Calu3 (cell line): ENCODE measurements at regions of chr7 and their contacts with region 1.

Region 1: DNA sequence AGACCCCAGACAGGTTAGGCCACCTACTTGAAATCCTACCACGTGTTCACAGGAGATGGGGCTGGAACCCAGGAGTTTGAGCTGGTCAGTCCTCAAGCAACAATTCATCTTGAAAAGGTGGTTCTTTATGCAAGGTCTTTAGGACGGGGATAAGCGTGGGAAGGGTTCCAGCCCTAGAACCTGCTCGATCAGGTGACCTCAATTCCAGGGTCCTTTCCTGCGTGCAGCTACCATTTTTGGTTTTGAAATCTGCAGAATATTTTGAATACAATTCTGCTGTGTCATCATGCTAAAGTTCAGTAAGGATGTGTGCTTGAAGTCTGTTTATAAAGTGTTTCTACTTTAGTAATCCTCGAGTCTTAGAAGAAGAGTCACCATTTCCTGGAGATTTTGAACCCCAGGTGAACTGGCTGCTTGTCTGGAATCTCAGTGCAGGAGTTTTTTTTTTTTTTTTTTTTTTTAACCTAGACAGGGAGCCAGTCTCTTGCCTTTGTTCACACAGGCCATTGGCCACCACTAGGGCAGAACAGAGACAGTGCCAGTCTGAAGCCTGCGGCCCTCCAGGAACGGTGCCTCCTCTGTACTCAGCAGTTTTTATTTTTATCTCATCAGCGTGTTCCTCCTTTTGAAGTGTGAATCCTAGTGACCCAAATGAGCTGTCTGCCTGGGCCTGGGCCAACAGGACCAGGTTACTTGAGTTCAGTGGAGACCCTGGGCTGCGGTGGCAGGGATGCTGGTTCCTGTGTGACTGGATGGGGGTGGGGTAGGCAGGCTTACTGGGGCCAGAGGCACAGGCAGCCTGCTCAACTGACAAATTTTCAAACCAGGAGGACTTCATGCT is 54.6 kb downstream of the EEPD1 start:
- DNase-seq: peak; percentile 31
- H3K4me3 Mint-ChIP-seq: peak overlapping the region; percentile 6
- H3K27ac Mint-ChIP-seq: peak overlapping the region; percentile 72
- H3K4me1 Mint-ChIP-seq: peaks cover 63% of the 10 kb centered on the region
- H3K27me3 Mint-ChIP-seq: no peaks in the 10 kb centered on the region
- CTCF ChIP-seq: no peak

Region 2: DNA sequence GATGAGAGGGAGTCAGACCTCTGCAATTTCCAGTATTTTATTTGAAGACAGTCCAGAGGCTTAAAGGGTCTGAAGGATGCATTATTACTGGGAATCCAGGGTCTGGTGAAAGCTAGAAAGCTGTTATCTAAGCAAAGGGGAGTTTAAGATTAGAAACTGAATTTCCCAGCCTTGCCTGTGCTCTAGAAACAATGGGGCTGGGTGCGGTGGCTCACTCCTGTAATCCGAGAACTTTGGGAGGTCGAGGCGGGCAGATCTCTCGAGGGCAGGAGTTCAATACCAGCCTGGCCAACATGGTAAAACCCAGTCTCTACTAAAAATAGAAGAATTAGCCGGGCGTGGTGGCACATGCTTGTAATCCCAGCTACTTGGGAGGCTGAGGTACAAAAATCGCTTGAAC is 110.4 kb after region 1 on chr7:
- CTCF ChIA-PET with region 1: interaction called, 12 read pairs
- intact Hi-C with region 1: no loop called
- DNase-seq: no peak
- H3K4me3 Mint-ChIP-seq: no peak overlapping the region
- H3K27ac Mint-ChIP-seq: no peak overlapping the region
- H3K4me1 Mint-ChIP-seq: peaks cover 11% of the 10 kb centered on the region
- H3K27me3 Mint-ChIP-seq: no peaks in the 10 kb centered on the region
- CTCF ChIP-seq: no peak